Heart right ventricle (tissue), 16 donors: ENCODE measurements at regions of chr22 and their contacts with region 1.

Region 1: GRCh38 chr22:17891481-17892167 is 117.4 kb upstream of the BID start:
- DNase-seq: peak; percentile 65 to 69
- ATAC-seq: peak; percentile 72 to 86 (median 80)
- H3K4me3 ChIP-seq: no peak overlapping the region
- H3K27ac ChIP-seq: peak overlapping the region in 9 of 10 donors; percentile 36 to 84 (median 75)
- H3K4me1 ChIP-seq: peaks cover 5 to 50% (median 27%) of the 10 kb centered on the region in 9 donors
- H3K27me3 ChIP-seq: no peaks in the 10 kb centered on the region
- CTCF ChIP-seq: peak; percentile 17 to 73 (median 51)

Region 2: GRCh38 chr22:17830043-17830961 is 61.3 kb before region 1 on chr22:
- intact Hi-C with region 1: loop called in 9 of 10 experiments (anchors 1 to 5 kb)
- DNase-seq: peak; percentile 83 to 85
- ATAC-seq: peak; percentile 62 to 88 (median 80)
- H3K4me3 ChIP-seq: peak overlapping the region in 1 of 10 donors; percentile 4
- H3K27ac ChIP-seq: peak overlapping the region in 8 of 10 donors; percentile 54 to 81 (median 72)
- H3K4me1 ChIP-seq: peaks cover 18 to 53% (median 41%) of the 10 kb centered on the region in 9 donors
- H3K27me3 ChIP-seq: no peaks in the 10 kb centered on the region
- CTCF ChIP-seq: peak; percentile 97 to 100 (median 100)

Region 3: DNA sequence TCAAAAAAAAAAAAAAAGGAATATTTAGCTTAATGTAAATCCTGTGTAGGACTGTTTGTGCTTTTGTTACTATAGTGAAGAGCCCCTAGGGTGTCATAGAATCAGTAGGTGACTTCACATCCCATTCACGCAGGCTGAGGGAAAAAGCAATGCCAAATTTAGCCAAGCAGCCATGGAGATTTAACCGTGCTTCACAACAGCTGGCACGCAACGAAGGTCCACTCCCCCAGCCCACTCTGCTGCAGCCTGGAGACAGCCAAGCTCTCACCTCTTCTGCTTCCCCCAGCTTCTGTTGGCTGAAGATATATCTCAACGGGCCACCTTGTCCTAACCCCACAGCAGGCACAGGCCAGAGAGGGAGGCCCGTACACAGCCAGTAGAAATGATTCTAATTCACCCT is 38.6 kb before region 1 on chr22:
- intact Hi-C with region 1: loop called in 2 of 10 experiments (anchors 5 kb)
- DNase-seq: peak in 1 of 2 donors; percentile 49
- ATAC-seq: peak; percentile 32 to 80 (median 66)
- H3K4me3 ChIP-seq: no peak overlapping the region
- H3K27ac ChIP-seq: peak overlapping the region; percentile 71 to 93 (median 88)
- H3K4me1 ChIP-seq: peaks cover 0 to 60% (median 21%) of the 10 kb centered on the region in 9 donors
- H3K27me3 ChIP-seq: no peaks in the 10 kb centered on the region
- CTCF ChIP-seq: no peak

Region 4: GRCh38 chr22:18001040-18001893 is 109.6 kb after region 1 on chr22:
- intact Hi-C with region 1: loop called in 1 of 10 experiments (anchors 5 kb)
- DNase-seq: peak; percentile 90 to 94
- ATAC-seq: peak; percentile 96 to 98 (median 97)
- H3K4me3 ChIP-seq: peak overlapping the region; percentile 57 to 92 (median 76)
- H3K27ac ChIP-seq: peak overlapping the region; percentile 85 to 98 (median 91)
- H3K4me1 ChIP-seq: peaks cover 0 to 53% (median 25%) of the 10 kb centered on the region in 9 donors
- H3K27me3 ChIP-seq: peaks cover 0 to 12% (median 0%) of the 10 kb centered on the region in 7 donors
- CTCF ChIP-seq: peak in 8 of 9 donors; percentile 21 to 67 (median 52)

Region 5: DNA sequence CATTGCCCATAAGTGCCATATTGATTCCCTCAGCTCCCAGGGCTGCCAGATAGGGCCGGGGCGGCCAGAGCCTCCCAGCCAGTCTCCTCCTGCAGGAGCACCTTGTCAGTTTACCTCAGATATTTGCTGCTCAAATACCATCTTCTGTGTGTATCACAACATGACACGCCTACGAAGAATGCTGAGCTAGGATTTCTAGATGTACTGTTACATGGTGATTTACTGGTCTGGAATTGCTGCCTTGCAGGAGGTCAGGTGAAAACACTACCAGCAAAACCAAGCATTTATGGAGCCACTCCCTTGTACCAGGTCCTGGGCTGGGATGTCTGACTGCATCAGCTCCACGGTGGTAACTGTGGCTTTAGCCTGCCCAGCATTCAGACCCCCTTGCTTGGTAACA is 120.9 kb after region 1 on chr22:
- intact Hi-C with region 1: loop called in 1 of 10 experiments (anchors 10 kb)
- DNase-seq: no peak
- ATAC-seq: peak in 1 of 8 donors; percentile 37
- H3K4me3 ChIP-seq: no peak overlapping the region
- H3K27ac ChIP-seq: no peak overlapping the region
- H3K4me1 ChIP-seq: peaks cover 0 to 9% (median 0%) of the 10 kb centered on the region in 9 donors
- H3K27me3 ChIP-seq: no peaks in the 10 kb centered on the region
- CTCF ChIP-seq: no peak

Region 6: DNA sequence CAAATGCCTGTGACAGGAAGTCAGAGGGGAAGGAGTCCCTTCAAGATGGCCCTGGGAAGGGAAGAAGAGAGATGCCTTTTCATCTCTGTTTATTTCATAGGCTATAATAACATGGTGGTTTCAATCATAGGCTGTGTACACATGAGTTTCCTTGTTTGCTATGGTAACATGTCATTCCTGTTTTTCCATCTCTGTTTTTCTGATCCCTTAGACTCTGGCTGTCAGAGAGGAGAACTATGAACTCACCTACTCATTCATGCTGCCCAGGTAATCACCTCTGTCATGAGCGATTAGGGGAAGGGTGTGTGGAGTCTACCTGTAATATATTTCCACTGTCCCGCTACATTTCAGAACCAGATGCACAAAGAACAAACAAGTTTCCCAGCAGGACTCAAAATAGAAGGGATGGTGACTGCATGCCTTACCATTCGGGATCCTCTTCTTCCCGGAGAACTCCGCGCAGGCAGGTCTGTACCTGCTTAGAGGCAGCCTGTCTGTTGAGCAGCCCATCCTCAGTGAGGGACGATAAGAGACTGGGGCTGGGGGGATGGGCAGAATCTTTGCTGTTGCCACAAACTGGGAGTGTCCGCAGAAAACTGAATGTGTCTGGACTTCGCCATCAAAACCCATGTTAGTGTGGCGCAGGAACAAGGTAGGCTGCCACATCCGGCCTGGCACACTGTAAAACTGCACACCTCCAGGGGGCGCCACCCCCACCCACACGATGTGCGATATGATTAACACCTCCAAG is 179.1 kb after region 1 on chr22:
- intact Hi-C with region 1: loop called in 4 of 10 experiments (anchors 5 kb)
- DNase-seq: no peak
- ATAC-seq: no peak
- H3K4me3 ChIP-seq: no peak overlapping the region
- H3K27ac ChIP-seq: no peak overlapping the region
- H3K4me1 ChIP-seq: peaks cover 0 to 38% (median 7%) of the 10 kb centered on the region in 9 donors
- H3K27me3 ChIP-seq: peaks cover 0 to 7% (median 0%) of the 10 kb centered on the region in 7 donors
- CTCF ChIP-seq: peak in 4 of 9 donors; percentile 9 to 23 (median 13)